Naive thymus-derived CD4-positive, alpha-beta T cell (primary cell): ENCODE measurements at regions of chr19 and their contacts with region 1.

Region 1: DNA sequence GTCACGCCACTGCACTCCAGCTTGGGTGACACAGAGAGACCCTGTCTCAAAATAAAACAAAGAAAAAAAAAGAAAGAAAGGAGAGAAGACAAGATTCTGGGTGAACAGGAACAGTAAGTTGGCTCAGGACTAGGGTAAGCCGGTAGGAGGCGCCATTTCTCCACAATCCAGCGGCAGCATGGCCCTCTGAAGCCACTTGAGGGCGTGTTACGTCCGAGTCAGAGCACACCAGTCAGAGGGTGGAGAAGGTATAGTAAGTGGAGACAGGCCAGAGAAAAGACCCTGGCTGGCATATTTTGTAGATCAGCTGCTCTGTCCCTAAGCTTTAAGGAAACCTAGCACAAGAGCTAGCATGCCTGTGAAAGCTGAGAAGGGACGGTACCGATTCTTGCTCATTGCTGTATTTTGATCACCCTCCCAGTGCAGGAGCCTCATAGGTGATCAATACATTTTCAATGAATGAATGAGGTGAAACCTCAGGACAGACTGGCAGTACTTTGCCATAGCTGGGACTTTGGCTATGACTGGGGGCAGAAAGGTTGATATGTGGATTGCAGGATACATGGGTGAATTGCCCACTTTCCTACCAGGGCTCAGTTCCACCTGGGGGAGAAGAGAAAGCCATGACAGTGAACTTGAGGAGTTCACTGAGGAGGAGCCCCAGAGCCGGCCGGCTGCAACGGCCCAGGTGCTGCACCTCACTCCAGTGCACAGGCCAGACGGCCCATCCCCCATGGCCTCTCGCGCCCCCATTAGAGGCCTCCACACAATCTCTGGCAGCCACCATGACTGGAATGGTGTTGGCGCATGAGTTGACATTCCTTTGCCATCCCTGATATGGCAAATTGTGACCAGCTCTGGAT is 23.5 kb downstream of the POU2F2 start:
- DNase-seq: peak; percentile 73 to 89 (median 83)
- ATAC-seq: peak; percentile 100
- H3K4me3 ChIP-seq: no peak overlapping the region
- H3K4me3 Mint-ChIP-seq: no peak overlapping the region
- H3K27ac ChIP-seq: no peak overlapping the region
- H3K27ac Mint-ChIP-seq: peak overlapping the region in 6 of 9 donors; percentile 28 to 60 (median 34)
- H3K4me1 ChIP-seq: no peaks in the 10 kb centered on the region
- H3K4me1 Mint-ChIP-seq: peaks cover 6 to 44% (median 13%) of the 10 kb centered on the region in 7 donors
- H3K27me3 ChIP-seq: no peaks in the 10 kb centered on the region
- H3K27me3 Mint-ChIP-seq: no peaks in the 10 kb centered on the region

Region 2: DNA sequence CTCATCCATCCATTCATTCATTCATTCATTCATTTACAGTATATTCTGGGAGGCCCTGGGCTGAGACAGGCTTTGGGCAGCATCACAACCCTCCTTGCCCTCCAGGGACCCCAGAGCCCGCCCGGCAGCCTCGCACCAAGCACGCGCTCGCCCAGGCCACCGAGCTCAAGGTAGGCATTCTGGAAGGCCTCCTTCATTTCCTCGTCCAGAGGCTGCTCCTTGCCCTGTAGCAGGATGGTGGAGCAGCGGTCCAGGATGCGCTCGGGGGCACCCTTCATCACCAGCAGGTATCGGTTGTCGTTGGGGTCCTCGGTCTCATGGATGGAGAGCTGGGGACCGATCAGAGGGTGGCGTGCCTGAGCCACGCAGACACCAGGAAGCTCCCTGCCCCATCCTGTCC is 130.3 kb before region 1 on chr19:
- CTCF ChIA-PET with region 1: no interaction called
- POLR2A ChIA-PET with region 1: no interaction called
- intact Hi-C with region 1: no loop called
- DNase-seq: no peak
- ATAC-seq: no peak
- H3K4me3 ChIP-seq: no peak overlapping the region
- H3K4me3 Mint-ChIP-seq: no peak overlapping the region
- H3K27ac ChIP-seq: no peak overlapping the region
- H3K27ac Mint-ChIP-seq: no peak overlapping the region
- H3K4me1 ChIP-seq: no peaks in the 10 kb centered on the region
- H3K4me1 Mint-ChIP-seq: peaks cover 0 to 2% (median 0%) of the 10 kb centered on the region in 7 donors
- H3K27me3 ChIP-seq: no peaks in the 10 kb centered on the region
- H3K27me3 Mint-ChIP-seq: no peaks in the 10 kb centered on the region

Region 3: GRCh38 chr19:42121656-42122069 is 12.9 kb after region 1 on chr19:
- CTCF ChIA-PET with region 1: interaction called, 29 read pairs
- POLR2A ChIA-PET with region 1: interaction called, 5 read pairs
- intact Hi-C with region 1: loop called (anchors 1 kb)
- DNase-seq: peak; percentile 15 to 83 (median 41)
- ATAC-seq: peak; percentile 95
- H3K4me3 ChIP-seq: peak overlapping the region; percentile 44
- H3K4me3 Mint-ChIP-seq: peak overlapping the region; percentile 43 to 90 (median 72)
- H3K27ac ChIP-seq: peak overlapping the region; percentile 77
- H3K27ac Mint-ChIP-seq: peak overlapping the region; percentile 78 to 98 (median 93)
- H3K4me1 ChIP-seq: peaks cover 31 to 44% of the 10 kb centered on the region in 2 donors
- H3K4me1 Mint-ChIP-seq: peaks cover 30 to 70% (median 57%) of the 10 kb centered on the region in 7 donors
- H3K27me3 ChIP-seq: no peaks in the 10 kb centered on the region
- H3K27me3 Mint-ChIP-seq: no peaks in the 10 kb centered on the region

Region 4: GRCh38 chr19:42184401-42184861 is 75.7 kb after region 1 on chr19:
- CTCF ChIA-PET with region 1: interaction called, 18 read pairs
- POLR2A ChIA-PET with region 1: interaction called, 3 read pairs
- intact Hi-C with region 1: loop called (anchors 1 kb)
- DNase-seq: peak; percentile 29 to 76 (median 51)
- ATAC-seq: peak; percentile 68
- H3K4me3 ChIP-seq: no peak overlapping the region
- H3K4me3 Mint-ChIP-seq: peak overlapping the region in 7 of 10 donors; percentile 28 to 71 (median 55)
- H3K27ac ChIP-seq: no peak overlapping the region
- H3K27ac Mint-ChIP-seq: peak overlapping the region; percentile 41 to 73 (median 65)
- H3K4me1 ChIP-seq: peaks cover 25 to 29% of the 10 kb centered on the region in 2 donors
- H3K4me1 Mint-ChIP-seq: peaks cover 43 to 62% (median 52%) of the 10 kb centered on the region in 7 donors
- H3K27me3 ChIP-seq: no peaks in the 10 kb centered on the region
- H3K27me3 Mint-ChIP-seq: peaks cover 0 to 16% (median 0%) of the 10 kb centered on the region in 5 donors

Region 5: GRCh38 chr19:42254989-42255765 is 146.4 kb after region 1 on chr19 and contains the start of gene ERF:
- CTCF ChIA-PET with region 1: no interaction called
- POLR2A ChIA-PET with region 1: no interaction called
- intact Hi-C with region 1: loop called in 1 of 2 experiments (anchors 1 kb)
- DNase-seq: peak; percentile 90 to 98 (median 94)
- ATAC-seq: peak; percentile 90
- H3K4me3 ChIP-seq: peak within 1 kb of the TSS; percentile 96
- H3K4me3 Mint-ChIP-seq: peak within 1 kb of the TSS; percentile 42 to 99 (median 77)
- H3K27ac ChIP-seq: peak within 1 kb of the TSS; percentile 99
- H3K27ac Mint-ChIP-seq: peak within 1 kb of the TSS in 8 of 9 donors; percentile 43 to 92 (median 82)
- H3K4me1 ChIP-seq: peaks cover 20 to 29% of the 10 kb centered on the region in 2 donors
- H3K4me1 Mint-ChIP-seq: peaks cover 20 to 37% (median 30%) of the 10 kb centered on the region in 7 donors
- H3K27me3 ChIP-seq: no peaks in the 10 kb centered on the region
- H3K27me3 Mint-ChIP-seq: peaks cover 0 to 10% (median 0%) of the 10 kb centered on the region in 5 donors
- total RNA-seq, gene ERF: 42.5 to 105 (median 51.8) TPM

Region 6: DNA sequence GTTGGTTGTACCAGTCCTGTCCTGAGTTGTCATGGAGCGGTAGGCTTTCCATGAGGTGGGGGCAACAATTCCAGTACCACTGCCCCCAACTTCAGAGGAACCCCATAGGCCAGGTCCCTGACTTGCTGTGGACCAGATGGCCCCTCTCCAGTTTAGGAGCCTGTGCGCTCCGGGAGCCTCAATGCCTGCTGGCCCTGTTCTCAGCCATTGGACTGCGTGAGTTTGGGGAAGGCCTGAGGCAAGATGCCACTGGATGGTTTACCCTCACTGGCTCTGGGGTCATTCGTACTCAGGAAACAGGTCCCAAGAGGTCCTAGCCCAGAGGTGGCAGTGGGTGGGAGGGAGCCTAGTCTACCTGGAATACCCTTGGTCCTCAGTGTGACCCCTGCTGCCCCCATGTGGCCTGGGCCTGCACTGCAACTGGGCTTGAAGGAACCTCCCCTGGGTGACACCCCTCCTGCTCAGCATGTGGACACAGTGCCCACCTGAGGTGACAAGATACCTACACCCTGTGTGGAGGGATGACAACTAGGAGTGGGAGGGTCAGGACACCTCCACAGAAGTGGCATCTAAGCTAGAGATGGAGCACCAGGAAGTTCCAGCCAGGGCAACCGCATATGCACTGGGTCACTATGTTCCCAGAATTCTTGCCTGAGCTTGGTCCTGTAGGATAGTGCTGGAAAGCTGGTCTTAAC is 187.2 kb after region 1 on chr19:
- CTCF ChIA-PET with region 1: interaction called, 5 read pairs
- POLR2A ChIA-PET with region 1: no interaction called
- intact Hi-C with region 1: loop called (anchors 1 kb)
- DNase-seq: peak; percentile 76 to 94 (median 85)
- ATAC-seq: peak; percentile 96
- H3K4me3 ChIP-seq: no peak overlapping the region
- H3K4me3 Mint-ChIP-seq: no peak overlapping the region
- H3K27ac ChIP-seq: no peak overlapping the region
- H3K27ac Mint-ChIP-seq: peak overlapping the region in 6 of 9 donors; percentile 11 to 70 (median 42)
- H3K4me1 ChIP-seq: peaks cover 0 to 8% of the 10 kb centered on the region in 2 donors
- H3K4me1 Mint-ChIP-seq: peaks cover 8 to 18% (median 12%) of the 10 kb centered on the region in 7 donors
- H3K27me3 ChIP-seq: no peaks in the 10 kb centered on the region
- H3K27me3 Mint-ChIP-seq: no peaks in the 10 kb centered on the region

Region 7: DNA sequence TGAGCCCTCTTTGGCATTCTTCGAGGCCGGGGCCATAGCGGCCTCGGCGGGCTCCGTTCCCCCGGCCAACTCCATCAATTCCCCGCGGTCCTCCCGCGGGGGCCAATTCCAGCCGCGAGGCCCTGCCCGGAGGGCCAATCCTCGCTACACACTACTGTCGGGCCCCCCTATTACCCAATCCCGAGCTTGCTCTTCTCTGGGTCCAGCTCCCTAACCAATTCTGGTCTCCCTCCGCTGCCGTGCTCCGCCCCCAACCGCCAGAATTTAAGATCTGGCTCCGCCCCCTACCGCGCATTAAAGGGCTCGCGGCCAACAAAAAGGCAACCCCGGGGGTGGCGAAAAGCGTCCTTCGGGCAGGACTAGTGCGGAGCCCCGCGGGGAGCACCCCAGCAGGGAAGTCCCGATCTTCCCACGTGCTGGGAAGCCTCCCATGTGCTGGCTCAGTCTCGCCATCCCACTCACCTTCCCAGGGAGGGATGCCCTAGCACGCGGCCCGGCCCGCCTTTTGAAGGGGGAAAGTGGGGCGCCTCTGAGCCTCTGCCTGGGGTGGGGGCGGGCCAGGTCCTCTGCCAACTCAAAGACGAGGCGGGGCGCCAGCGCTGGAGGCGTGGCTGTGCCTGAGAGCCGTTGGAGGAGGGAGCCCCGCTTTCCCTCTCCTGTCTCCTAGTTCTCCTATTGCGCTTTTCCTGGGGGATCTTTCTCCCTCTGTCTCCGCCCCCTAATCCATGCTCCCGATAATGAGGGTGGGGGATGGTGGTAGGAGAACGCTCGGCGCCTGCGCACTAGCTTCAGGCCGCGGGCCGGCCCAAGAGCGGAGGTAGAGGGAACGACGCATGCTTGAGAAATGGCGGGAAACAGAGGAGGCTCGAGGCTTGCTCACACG is 314.9 kb after region 1 on chr19:
- CTCF ChIA-PET with region 1: no interaction called
- POLR2A ChIA-PET with region 1: no interaction called
- intact Hi-C with region 1: loop called (anchors 5 kb)
- DNase-seq: peak; percentile 79 to 94 (median 94)
- ATAC-seq: peak; percentile 95
- H3K4me3 ChIP-seq: peak overlapping the region; percentile 70
- H3K4me3 Mint-ChIP-seq: peak overlapping the region; percentile 89 to 100 (median 98)
- H3K27ac ChIP-seq: peak overlapping the region; percentile 77
- H3K27ac Mint-ChIP-seq: peak overlapping the region; percentile 72 to 96 (median 87)
- H3K4me1 ChIP-seq: peaks cover 21 to 30% of the 10 kb centered on the region in 2 donors
- H3K4me1 Mint-ChIP-seq: peaks cover 30 to 46% (median 39%) of the 10 kb centered on the region in 7 donors
- H3K27me3 ChIP-seq: no peaks in the 10 kb centered on the region
- H3K27me3 Mint-ChIP-seq: peaks cover 0 to 4% (median 0%) of the 10 kb centered on the region in 5 donors

Region 8: GRCh38 chr19:42440357-42441048 is 331.7 kb after region 1 on chr19:
- CTCF ChIA-PET with region 1: interaction called, 4 read pairs
- POLR2A ChIA-PET with region 1: no interaction called
- intact Hi-C with region 1: loop called (anchors 1 to 5 kb)
- DNase-seq: peak; percentile 51 to 84 (median 76)
- ATAC-seq: peak; percentile 75
- H3K4me3 ChIP-seq: no peak overlapping the region
- H3K4me3 Mint-ChIP-seq: peak overlapping the region in 7 of 10 donors; percentile 24 to 69 (median 47)
- H3K27ac ChIP-seq: no peak overlapping the region
- H3K27ac Mint-ChIP-seq: peak overlapping the region in 8 of 9 donors; percentile 2 to 53 (median 25)
- H3K4me1 ChIP-seq: peaks cover 13 to 16% of the 10 kb centered on the region in 2 donors
- H3K4me1 Mint-ChIP-seq: peaks cover 20 to 34% (median 31%) of the 10 kb centered on the region in 7 donors
- H3K27me3 ChIP-seq: no peaks in the 10 kb centered on the region
- H3K27me3 Mint-ChIP-seq: peaks cover 0 to 7% (median 0%) of the 10 kb centered on the region in 5 donors

Region 9: GRCh38 chr19:43957891-43958290 is 1849.1 kb after region 1 on chr19:
- CTCF ChIA-PET with region 1: no interaction called
- POLR2A ChIA-PET with region 1: no interaction called
- intact Hi-C with region 1: no loop called
- DNase-seq: no peak
- ATAC-seq: no peak
- H3K4me3 ChIP-seq: no peak overlapping the region
- H3K4me3 Mint-ChIP-seq: no peak overlapping the region
- H3K27ac ChIP-seq: no peak overlapping the region
- H3K27ac Mint-ChIP-seq: no peak overlapping the region
- H3K4me1 ChIP-seq: no peaks in the 10 kb centered on the region
- H3K4me1 Mint-ChIP-seq: no peaks in the 10 kb centered on the region
- H3K27me3 ChIP-seq: no peaks in the 10 kb centered on the region
- H3K27me3 Mint-ChIP-seq: peaks cover 0 to 18% (median 5%) of the 10 kb centered on the region in 5 donors